T-cell (primary cell): ENCODE measurements at regions of chr1 and their contacts with region 1.

Region 1: DNA sequence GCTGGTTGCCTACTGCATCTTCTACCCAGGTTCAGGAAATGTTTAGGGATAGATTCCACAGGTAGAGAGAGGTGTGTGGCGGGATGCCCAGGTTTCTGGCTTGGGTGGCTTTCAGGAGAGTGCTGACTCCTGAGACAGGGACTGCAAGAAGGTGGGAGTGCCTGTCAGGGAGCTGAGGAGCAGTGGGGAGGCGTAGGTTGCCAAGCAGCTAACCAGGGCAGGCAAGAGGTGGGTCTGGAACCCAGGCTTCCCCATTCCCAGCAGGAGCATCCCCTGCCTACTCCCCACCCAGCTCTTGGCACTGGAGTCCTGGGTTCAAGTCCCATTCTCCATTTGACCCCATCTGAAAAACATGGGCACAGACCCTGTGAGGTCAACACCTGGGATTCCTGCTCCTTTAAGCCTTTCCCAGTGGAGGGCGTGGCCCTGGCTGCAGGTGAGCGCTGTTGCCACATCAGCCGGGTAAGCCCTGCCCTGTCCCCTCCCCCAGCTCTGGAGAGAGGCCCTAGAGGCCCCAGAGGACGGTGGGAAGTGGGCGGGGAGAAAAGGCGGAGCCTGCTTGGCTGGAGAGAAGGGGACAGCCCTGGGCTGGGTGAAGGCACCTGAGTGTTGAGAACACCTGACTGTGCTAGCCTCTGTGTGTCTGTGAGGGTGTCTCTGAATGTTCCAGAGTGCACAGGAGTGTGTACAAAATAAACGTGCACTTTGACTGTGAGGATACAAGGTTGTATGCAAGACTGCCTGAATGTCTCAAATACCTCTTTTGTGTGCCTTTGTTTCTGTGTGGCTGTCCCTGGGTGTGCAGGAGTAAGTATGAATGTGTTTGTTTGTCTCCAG is 14.0 kb upstream of the SYNC start:
- DNase-seq: peak in 26 of 35 experiments; percentile 8 to 52 (median 24)
- ATAC-seq: peak in 2 of 4 experiments; percentile 50 to 69
- H3K4me3 ChIP-seq: no peak overlapping the region
- H3K4me3 Mint-ChIP-seq: no peak overlapping the region
- H3K27ac ChIP-seq: no peak overlapping the region
- H3K27ac Mint-ChIP-seq: no peak overlapping the region
- H3K4me1 ChIP-seq: peaks cover 0 to 20% of the 10 kb centered on the region in 2 experiments
- H3K4me1 Mint-ChIP-seq: peaks cover 4 to 16% (median 11%) of the 10 kb centered on the region in 3 donors
- H3K27me3 ChIP-seq: peaks cover 0 to 40% of the 10 kb centered on the region in 2 experiments
- H3K27me3 Mint-ChIP-seq: peaks cover 3 to 9% of the 10 kb centered on the region in 2 donors

Region 2: DNA sequence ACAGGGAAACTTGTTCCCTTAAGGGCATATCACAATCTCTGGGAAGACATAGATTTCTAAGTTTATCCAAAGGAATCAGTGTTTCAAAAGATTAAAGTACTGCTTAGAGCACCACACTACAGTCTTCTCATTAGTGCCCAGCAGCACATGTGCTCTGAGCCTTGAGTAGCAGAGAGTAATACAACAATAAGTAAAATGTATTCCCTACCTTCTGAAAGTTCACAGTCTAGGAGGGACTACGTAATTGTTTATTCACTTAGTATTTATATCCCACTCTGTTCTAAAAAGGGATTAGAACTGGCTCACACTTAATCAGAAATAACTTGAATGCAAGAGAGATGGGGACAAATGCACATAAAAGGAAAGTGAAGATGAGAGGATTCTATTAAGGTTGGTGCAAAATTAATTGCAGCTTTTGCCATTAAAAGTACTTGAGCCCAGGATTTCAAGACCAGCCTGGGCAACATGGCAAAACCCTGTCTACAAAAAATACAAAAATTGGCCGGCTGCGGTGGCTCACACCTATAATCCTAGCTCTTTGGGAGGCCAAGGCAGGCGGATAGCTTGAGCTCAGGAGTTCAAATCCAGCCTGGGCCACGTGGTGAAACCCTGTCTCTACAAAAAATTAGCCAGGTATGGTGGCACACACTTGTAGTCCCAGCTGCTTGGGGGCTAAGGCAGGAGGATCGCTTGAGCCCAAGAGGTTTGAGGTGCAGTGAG is 22.9 kb before region 1 on chr1:
- CTCF ChIA-PET with region 1: interaction called, 3 to 10 read pairs
- POLR2A ChIA-PET with region 1: interaction called in 1 of 2 experiments, 3 read pairs
- DNase-seq: no peak
- ATAC-seq: no peak
- H3K4me3 ChIP-seq: no peak overlapping the region
- H3K4me3 Mint-ChIP-seq: no peak overlapping the region
- H3K27ac ChIP-seq: no peak overlapping the region
- H3K27ac Mint-ChIP-seq: no peak overlapping the region
- H3K4me1 ChIP-seq: peaks cover 0 to 5% of the 10 kb centered on the region in 2 experiments
- H3K4me1 Mint-ChIP-seq: no peaks in the 10 kb centered on the region
- H3K27me3 ChIP-seq: peaks cover 0 to 2% of the 10 kb centered on the region in 2 experiments
- H3K27me3 Mint-ChIP-seq: no peaks in the 10 kb centered on the region

Region 3: GRCh38 chr1:32773018-32773763 is 56.7 kb after region 1 on chr1:
- CTCF ChIA-PET with region 1: interaction called, 13 to 20 read pairs
- POLR2A ChIA-PET with region 1: no interaction called
- DNase-seq: peak; percentile 42 to 85 (median 66)
- ATAC-seq: peak; percentile 70 to 86 (median 81)
- H3K4me3 ChIP-seq: no peak overlapping the region
- H3K4me3 Mint-ChIP-seq: no peak overlapping the region
- H3K27ac ChIP-seq: no peak overlapping the region
- H3K27ac Mint-ChIP-seq: peak overlapping the region; percentile 58 to 62
- H3K4me1 ChIP-seq: peaks cover 0 to 9% of the 10 kb centered on the region in 2 experiments
- H3K4me1 Mint-ChIP-seq: peaks cover 5 to 14% (median 13%) of the 10 kb centered on the region in 3 donors
- H3K27me3 ChIP-seq: peaks cover 0 to 6% of the 10 kb centered on the region in 2 experiments
- H3K27me3 Mint-ChIP-seq: no peaks in the 10 kb centered on the region

Region 4: DNA sequence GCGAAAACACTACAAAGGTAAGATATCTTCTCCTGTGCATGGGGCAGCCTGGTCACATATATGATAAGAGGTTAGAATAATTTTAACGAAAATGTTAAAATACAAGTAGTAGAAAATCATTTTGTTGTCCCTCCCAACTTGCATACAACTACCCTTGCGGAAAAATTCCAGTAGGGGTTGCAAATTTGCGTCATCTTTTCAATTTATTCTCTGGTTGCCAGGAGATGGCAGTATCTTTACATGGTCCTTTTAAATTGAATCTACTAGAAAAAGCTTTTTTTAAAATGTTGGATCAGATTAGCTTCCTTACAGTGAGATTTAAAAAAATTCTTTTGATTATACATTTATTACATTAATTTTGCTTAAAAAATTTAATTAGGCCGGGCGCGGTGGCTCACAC is 111.8 kb after region 1 on chr1:
- CTCF ChIA-PET with region 1: no interaction called
- POLR2A ChIA-PET with region 1: no interaction called
- DNase-seq: no peak
- ATAC-seq: no peak
- H3K4me3 ChIP-seq: no peak overlapping the region
- H3K4me3 Mint-ChIP-seq: no peak overlapping the region
- H3K27ac ChIP-seq: no peak overlapping the region
- H3K27ac Mint-ChIP-seq: no peak overlapping the region
- H3K4me1 ChIP-seq: no peaks in the 10 kb centered on the region
- H3K4me1 Mint-ChIP-seq: peaks cover 23 to 42% (median 28%) of the 10 kb centered on the region in 3 donors
- H3K27me3 ChIP-seq: no peaks in the 10 kb centered on the region
- H3K27me3 Mint-ChIP-seq: no peaks in the 10 kb centered on the region

Region 5: DNA sequence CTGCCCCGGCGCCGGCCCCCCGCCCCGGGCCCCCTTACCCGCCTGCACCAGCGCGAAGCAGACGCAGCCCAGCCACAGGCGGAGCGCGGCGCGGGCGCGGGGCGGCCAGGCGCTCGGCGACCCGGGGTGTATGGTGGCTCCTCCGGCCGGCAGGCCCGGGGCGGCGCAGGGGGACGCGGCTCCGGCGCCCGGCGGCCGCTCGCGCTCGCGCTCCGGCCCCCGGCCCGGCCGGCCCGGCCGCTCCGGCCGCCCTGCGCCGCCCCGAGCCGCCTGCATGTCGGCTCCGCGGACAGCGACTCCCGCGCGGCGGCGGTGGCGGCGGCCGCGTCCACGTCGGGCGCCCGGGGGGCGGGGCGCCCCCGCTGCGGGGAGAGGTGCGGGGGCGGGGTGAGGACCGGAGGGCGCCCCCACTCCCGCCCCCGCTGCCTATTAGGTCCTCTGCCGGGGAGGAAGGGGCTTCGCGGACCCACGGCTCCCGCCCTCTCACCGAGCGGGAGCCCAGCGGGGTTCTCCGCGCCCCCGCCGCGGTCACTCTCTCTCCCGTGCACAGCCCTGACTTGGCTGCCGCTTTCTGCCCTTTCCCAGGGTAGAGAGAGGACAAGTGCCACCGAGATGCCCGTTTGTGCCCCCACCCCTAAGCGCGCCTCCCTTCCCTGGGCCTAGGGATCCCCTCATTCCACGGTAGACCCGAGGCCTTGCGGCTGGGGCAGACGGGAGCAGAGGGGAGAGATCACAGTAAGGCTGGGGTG is 154.3 kb after region 1 on chr1 and contains the start of gene FNDC5:
- CTCF ChIA-PET with region 1: interaction called in 1 of 2 experiments, 11 read pairs
- POLR2A ChIA-PET with region 1: no interaction called
- DNase-seq: no peak
- ATAC-seq: peak in 3 of 4 experiments; percentile 24 to 45 (median 43)
- H3K4me3 ChIP-seq: peak within 1 kb of the TSS in 1 of 2 donors; percentile 17
- H3K4me3 Mint-ChIP-seq: peak within 1 kb of the TSS; percentile 60 to 68 (median 66)
- H3K27ac ChIP-seq: no peak within 1 kb of the TSS
- H3K27ac Mint-ChIP-seq: no peak within 1 kb of the TSS
- H3K4me1 ChIP-seq: peaks cover 0 to 25% of the 10 kb centered on the region in 2 experiments
- H3K4me1 Mint-ChIP-seq: peaks cover 13 to 24% (median 23%) of the 10 kb centered on the region in 3 donors
- H3K27me3 ChIP-seq: peaks cover 3 to 60% of the 10 kb centered on the region in 2 experiments
- H3K27me3 Mint-ChIP-seq: peaks cover 43 to 60% of the 10 kb centered on the region in 2 donors
- total RNA-seq, gene FNDC5: not detected